ENCODE measurements at regions of chr1 and their contacts with region 1.

Region 1: DNA sequence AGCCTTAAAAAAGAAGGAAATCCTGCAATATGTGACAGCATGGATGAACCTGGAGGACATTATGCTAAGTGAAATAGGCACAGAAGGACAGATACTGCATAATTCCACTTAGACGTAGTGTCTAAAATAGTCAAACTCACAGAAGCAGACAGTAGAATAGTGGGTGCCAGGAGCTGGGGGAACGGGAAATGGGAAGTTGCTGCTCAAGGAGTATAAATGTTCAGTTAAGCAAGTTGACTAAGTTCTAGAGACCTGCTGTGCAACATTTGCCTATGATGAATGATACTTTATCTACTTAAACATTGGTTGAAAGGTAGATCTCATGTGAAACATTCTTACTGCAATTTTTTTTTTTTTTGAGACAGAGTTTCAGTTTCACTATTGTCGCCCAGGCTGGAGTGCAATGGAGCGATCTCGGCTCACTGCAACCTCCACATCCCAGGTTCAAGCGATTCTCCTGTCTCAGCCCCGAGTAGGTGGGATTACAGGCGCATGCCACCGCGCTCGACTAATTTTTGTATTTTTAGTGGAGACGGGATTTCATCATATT is 197.8 kb downstream of the HIVEP3 start:
- DNase-seq: no peak
- ATAC-seq: no peak
- H3K4me3 ChIP-seq: peak overlapping the region in 1 of 12 donors; percentile 3
- H3K27ac ChIP-seq: no peak overlapping the region
- H3K4me1 ChIP-seq: peaks cover 0 to 48% (median 9%) of the 10 kb centered on the region in 12 donors
- H3K27me3 ChIP-seq: no peaks in the 10 kb centered on the region
- CTCF ChIP-seq: no peak
- POLR2A ChIP-seq: no peak

Region 2: GRCh38 chr1:41662061-41662764 is 58.7 kb before region 1 on chr1:
- intact Hi-C with region 1: loop called in 1 of 10 experiments (anchors 5 kb)
- DNase-seq: peak; percentile 76 to 87 (median 83)
- ATAC-seq: peak; percentile 36 to 81 (median 80)
- H3K4me3 ChIP-seq: peak overlapping the region; percentile 47 to 94 (median 70)
- H3K27ac ChIP-seq: peak overlapping the region; percentile 25 to 97 (median 92)
- H3K4me1 ChIP-seq: peaks cover 0 to 66% (median 18%) of the 10 kb centered on the region in 12 donors
- H3K27me3 ChIP-seq: no peaks in the 10 kb centered on the region
- CTCF ChIP-seq: no peak
- POLR2A ChIP-seq: peak; percentile 8 to 78